Transverse colon (tissue), 4 donors: ENCODE measurements at regions of chr15 and their contacts with region 1.

Region 1: GRCh38 chr15:81843226-81843625 is 202.6 kb downstream of the MEX3B start:
- DNase-seq: no peak
- H3K4me3 ChIP-seq: no peak overlapping the region
- H3K27ac ChIP-seq: no peak overlapping the region
- H3K4me1 ChIP-seq: no peaks in the 10 kb centered on the region
- H3K27me3 ChIP-seq: no peaks in the 10 kb centered on the region
- CTCF ChIP-seq: no peak
- EP300 ChIP-seq: no peak
- POLR2A ChIP-seq: no peak

Region 2: GRCh38 chr15:81146006-81146405 is 697.2 kb before region 1 on chr15:
- in situ Hi-C with region 1: no loop called
- intact Hi-C with region 1: loop called (anchors 5 kb)
- DNase-seq: no peak
- H3K4me3 ChIP-seq: no peak overlapping the region
- H3K27ac ChIP-seq: no peak overlapping the region
- H3K4me1 ChIP-seq: no peaks in the 10 kb centered on the region
- H3K27me3 ChIP-seq: no peaks in the 10 kb centered on the region
- CTCF ChIP-seq: no peak
- EP300 ChIP-seq: no peak
- POLR2A ChIP-seq: no peak

Region 3: GRCh38 chr15:81780966-81781365 is 62.3 kb before region 1 on chr15:
- in situ Hi-C with region 1: no loop called
- intact Hi-C with region 1: no loop called
- DNase-seq: no peak
- H3K4me3 ChIP-seq: no peak overlapping the region
- H3K27ac ChIP-seq: no peak overlapping the region
- H3K4me1 ChIP-seq: no peaks in the 10 kb centered on the region
- H3K27me3 ChIP-seq: no peaks in the 10 kb centered on the region
- CTCF ChIP-seq: no peak
- EP300 ChIP-seq: no peak
- POLR2A ChIP-seq: no peak